ENCODE measurements at regions of chr3 and their contacts with region 1.

Region 1: GRCh38 chr3:14651440-14652251 is at the start of gene CCDC174:
- DNase-seq: peak; percentile 95 to 98 (median 97)
- H3K4me3 ChIP-seq: peak within 1 kb of the TSS; percentile 67 to 98
- H3K4me3 Mint-ChIP-seq: peak within 1 kb of the TSS; percentile 84 to 99 (median 94)
- H3K27ac ChIP-seq: peak within 1 kb of the TSS; percentile 98
- H3K27ac Mint-ChIP-seq: peak within 1 kb of the TSS; percentile 91 to 100 (median 98)
- H3K4me1 ChIP-seq: peaks cover 37% of the 10 kb centered on the region
- H3K4me1 Mint-ChIP-seq: peaks cover 27 to 50% (median 40%) of the 10 kb centered on the region in 4 donors
- H3K27me3 ChIP-seq: no peaks in the 10 kb centered on the region
- H3K27me3 Mint-ChIP-seq: no peaks in the 10 kb centered on the region
- total RNA-seq, gene CCDC174: 45.9 to 51.8 TPM

Region 2: DNA sequence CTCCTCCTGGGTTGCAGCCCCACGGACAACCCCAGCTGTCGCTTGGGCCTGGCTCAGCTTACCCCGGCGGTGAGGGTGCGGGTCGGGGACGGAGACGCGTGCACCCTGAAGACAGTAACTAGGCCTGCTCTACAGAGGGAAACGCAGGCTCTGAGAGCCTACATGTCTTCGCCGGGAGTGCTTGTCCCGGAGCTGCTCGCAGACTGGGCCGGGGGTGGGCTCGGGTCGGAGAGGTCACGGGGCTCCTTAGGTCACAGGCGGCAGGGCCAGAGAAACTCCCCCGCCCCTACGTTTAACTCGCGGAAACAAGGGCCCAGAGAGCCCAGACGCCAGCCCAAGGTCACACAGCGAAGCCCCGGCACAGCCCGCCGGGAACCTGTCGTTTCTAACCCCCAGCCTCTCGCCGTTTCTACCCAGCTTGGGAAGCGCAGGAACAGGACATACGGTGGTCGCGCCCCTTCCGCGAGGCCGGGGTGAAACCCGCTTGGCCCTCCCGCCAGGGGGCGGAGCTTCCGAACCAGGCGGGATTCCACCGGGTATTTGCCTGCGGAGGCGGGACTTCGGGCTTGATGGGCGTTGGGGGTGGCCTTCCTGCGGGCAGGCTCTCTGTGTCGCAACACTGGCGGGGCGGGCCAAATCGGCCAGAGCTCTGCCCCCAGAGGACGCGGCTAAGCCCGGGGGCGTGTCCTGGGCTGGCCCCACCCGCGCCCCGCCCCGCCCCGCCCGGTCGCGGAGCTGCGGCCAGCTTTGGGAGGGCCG is 1171.9 kb before region 1 on chr3 and contains the start of gene HDAC11:
- CTCF ChIA-PET with region 1: no interaction called
- POLR2A ChIA-PET with region 1: interaction called, 3 read pairs
- intact Hi-C with region 1: loop called (anchors 2 kb)
- DNase-seq: peak; percentile 96 to 97 (median 96)
- H3K4me3 ChIP-seq: peak within 1 kb of the TSS; percentile 52 to 92
- H3K4me3 Mint-ChIP-seq: peak within 1 kb of the TSS; percentile 91 to 95 (median 94)
- H3K27ac ChIP-seq: peak within 1 kb of the TSS; percentile 90
- H3K27ac Mint-ChIP-seq: peak within 1 kb of the TSS; percentile 94 to 96 (median 96)
- H3K4me1 ChIP-seq: peaks cover 28% of the 10 kb centered on the region
- H3K4me1 Mint-ChIP-seq: peaks cover 6 to 35% (median 20%) of the 10 kb centered on the region in 4 donors
- H3K27me3 ChIP-seq: no peaks in the 10 kb centered on the region
- H3K27me3 Mint-ChIP-seq: peaks cover 0 to under 1% of the 10 kb centered on the region in 2 donors
- total RNA-seq, gene HDAC11: 7.1 to 7.6 TPM

Region 3: GRCh38 chr3:14124615-14125190 is 526.9 kb before region 1 on chr3 and contains the starts of genes CHCHD4 and TMEM43:
- CTCF ChIA-PET with region 1: no interaction called
- POLR2A ChIA-PET with region 1: interaction called, 19 read pairs
- intact Hi-C with region 1: no loop called
- DNase-seq: peak; percentile 97 to 99 (median 99)
- H3K4me3 ChIP-seq: peak within 1 kb of the TSS; percentile 53 to 78
- H3K4me3 Mint-ChIP-seq: peak within 1 kb of the TSS; percentile 95 to 98 (median 96)
- H3K27ac ChIP-seq: peak within 1 kb of the TSS; percentile 89
- H3K27ac Mint-ChIP-seq: peak within 1 kb of the TSS; percentile 96 to 97 (median 97)
- H3K4me1 ChIP-seq: peaks cover 38% of the 10 kb centered on the region
- H3K4me1 Mint-ChIP-seq: peaks cover 38 to 64% (median 54%) of the 10 kb centered on the region in 4 donors
- H3K27me3 ChIP-seq: no peaks in the 10 kb centered on the region
- H3K27me3 Mint-ChIP-seq: no peaks in the 10 kb centered on the region
- total RNA-seq, gene CHCHD4: 7.5 to 9.3 TPM
- total RNA-seq, gene TMEM43: 69.3 to 69.7 TPM

Region 4: DNA sequence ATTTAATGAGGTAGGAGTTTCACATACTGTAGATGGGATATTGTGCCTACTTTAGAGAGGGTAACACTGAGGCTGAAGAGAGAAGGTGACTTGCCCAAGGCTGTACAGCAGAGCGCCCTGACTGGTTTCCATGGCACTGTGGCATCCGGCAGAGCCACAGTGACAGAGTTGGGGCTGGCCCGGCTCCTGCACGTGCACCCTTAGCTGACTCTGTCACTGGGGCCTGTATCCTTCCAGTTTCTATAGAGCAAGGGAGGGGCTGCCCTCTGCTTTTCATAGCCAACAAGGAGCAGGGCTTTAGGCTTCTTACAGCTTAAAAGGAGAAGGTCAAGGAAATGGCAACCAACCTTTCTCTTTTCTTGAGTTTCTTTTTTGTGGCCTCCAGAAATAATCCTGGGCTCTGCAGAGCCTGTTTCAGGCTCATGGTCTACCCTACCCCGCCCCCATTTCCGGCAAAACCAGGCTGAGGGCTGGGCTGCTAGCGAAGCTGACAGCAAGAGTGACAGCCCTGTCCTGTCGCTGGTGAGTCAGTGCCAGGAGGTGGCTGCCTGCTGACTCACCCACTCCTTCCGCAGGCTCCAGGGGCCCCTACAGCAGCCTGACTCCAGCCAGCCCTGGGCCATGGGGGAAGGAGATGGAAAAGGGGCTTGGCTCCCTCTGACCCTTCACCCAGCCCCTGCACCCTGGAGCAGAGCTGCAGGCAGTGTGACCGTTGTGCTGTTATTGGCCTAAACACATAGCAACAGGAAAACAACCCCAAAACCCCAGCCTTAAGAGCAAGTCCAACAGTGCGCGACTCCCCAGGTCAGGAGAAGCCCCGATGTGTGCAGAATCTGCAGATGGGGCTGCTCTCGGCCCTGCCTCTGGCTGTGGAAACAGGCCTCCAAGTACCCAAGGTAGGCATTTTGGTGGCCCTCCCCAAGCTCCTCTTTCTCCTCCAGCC is 219.5 kb before region 1 on chr3:
- CTCF ChIA-PET with region 1: no interaction called
- POLR2A ChIA-PET with region 1: interaction called, 16 read pairs
- intact Hi-C with region 1: no loop called
- DNase-seq: peak; percentile 93 to 99 (median 94)
- H3K4me3 ChIP-seq: peak overlapping the region; percentile 55 to 77
- H3K4me3 Mint-ChIP-seq: peak overlapping the region; percentile 77 to 93 (median 80)
- H3K27ac ChIP-seq: peak overlapping the region; percentile 98
- H3K27ac Mint-ChIP-seq: peak overlapping the region; percentile 97 to 100 (median 100)
- H3K4me1 ChIP-seq: peaks cover 97% of the 10 kb centered on the region
- H3K4me1 Mint-ChIP-seq: peaks cover 64 to 98% (median 87%) of the 10 kb centered on the region in 4 donors
- H3K27me3 ChIP-seq: no peaks in the 10 kb centered on the region
- H3K27me3 Mint-ChIP-seq: no peaks in the 10 kb centered on the region

Region 5: GRCh38 chr3:14565868-14566588 is 85.6 kb before region 1 on chr3:
- CTCF ChIA-PET with region 1: no interaction called
- POLR2A ChIA-PET with region 1: no interaction called
- intact Hi-C with region 1: no loop called
- DNase-seq: no peak
- H3K4me3 ChIP-seq: no peak overlapping the region
- H3K4me3 Mint-ChIP-seq: no peak overlapping the region
- H3K27ac ChIP-seq: no peak overlapping the region
- H3K27ac Mint-ChIP-seq: no peak overlapping the region
- H3K4me1 ChIP-seq: no peaks in the 10 kb centered on the region
- H3K4me1 Mint-ChIP-seq: peaks cover 0 to 1% (median 0%) of the 10 kb centered on the region in 4 donors
- H3K27me3 ChIP-seq: no peaks in the 10 kb centered on the region
- H3K27me3 Mint-ChIP-seq: peaks cover 9 to 13% of the 10 kb centered on the region in 2 donors

Region 6: GRCh38 chr3:14672588-14672987 is 20.9 kb after region 1 on chr3:
- CTCF ChIA-PET with region 1: no interaction called
- POLR2A ChIA-PET with region 1: interaction called, 10 read pairs
- intact Hi-C with region 1: no loop called
- DNase-seq: no peak
- H3K4me3 ChIP-seq: no peak overlapping the region
- H3K4me3 Mint-ChIP-seq: no peak overlapping the region
- H3K27ac ChIP-seq: no peak overlapping the region
- H3K27ac Mint-ChIP-seq: peak overlapping the region in 3 of 7 donors; percentile 8 to 60 (median 8)
- H3K4me1 ChIP-seq: no peaks in the 10 kb centered on the region
- H3K4me1 Mint-ChIP-seq: peaks cover 0 to 3% (median 0%) of the 10 kb centered on the region in 4 donors
- H3K27me3 ChIP-seq: no peaks in the 10 kb centered on the region
- H3K27me3 Mint-ChIP-seq: no peaks in the 10 kb centered on the region

Region 7: DNA sequence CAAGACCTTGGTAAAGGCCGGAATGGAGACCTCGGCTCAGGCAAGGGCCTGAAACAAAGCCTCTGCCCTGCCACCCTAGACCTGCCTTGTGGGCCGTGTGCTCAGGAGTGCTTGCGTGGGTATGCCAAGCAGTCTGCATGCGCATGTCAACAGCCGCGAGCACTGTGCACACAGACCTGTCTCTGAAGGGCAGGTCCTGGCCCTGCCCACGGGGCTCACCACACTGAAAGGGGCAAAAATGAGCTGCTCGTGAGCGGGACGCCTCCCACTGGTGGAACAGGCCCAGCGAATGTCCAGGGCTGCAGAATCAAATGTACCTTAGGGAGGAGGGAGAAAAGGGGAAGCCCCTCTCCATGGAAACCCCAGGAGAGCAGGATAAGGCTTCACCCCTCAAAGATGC is 122.8 kb after region 1 on chr3:
- CTCF ChIA-PET with region 1: no interaction called
- POLR2A ChIA-PET with region 1: no interaction called
- intact Hi-C with region 1: no loop called
- DNase-seq: no peak
- H3K4me3 ChIP-seq: no peak overlapping the region
- H3K4me3 Mint-ChIP-seq: no peak overlapping the region
- H3K27ac ChIP-seq: no peak overlapping the region
- H3K27ac Mint-ChIP-seq: no peak overlapping the region
- H3K4me1 ChIP-seq: no peaks in the 10 kb centered on the region
- H3K4me1 Mint-ChIP-seq: no peaks in the 10 kb centered on the region
- H3K27me3 ChIP-seq: no peaks in the 10 kb centered on the region
- H3K27me3 Mint-ChIP-seq: no peaks in the 10 kb centered on the region

Region 8: DNA sequence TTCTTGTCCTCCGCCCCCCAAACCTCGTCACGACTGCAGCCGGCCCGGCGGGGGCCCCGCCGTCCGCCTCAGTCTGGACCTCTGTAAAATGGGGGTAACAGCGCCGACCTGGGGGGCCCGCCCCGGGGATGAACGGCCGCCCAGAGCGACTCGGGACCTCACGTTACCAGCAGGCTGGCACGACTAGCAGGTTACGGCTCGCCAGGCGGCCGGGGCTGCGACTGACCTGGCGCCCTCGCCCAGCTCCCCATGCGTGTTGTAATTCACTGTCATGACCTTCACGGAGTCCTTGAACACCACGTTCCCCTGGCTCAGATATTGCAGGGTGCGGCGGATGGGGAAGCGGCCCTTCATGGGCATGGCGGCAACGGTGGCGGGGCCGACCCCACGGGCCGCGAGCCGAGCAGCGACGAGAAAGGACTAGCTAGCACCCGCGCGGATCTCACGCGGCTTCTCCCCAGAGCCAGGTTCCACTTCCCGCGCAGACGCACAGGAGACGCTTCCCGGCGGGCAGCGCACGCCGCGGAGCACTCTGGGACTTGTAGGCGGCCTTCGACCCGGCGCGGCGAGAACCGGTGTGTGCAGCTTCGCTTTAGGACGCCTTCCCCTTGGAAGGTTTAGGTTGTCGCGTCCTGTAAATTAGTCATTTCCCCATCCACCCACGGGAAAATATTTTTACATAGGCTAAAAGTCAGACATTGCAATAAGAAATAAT is 413.3 kb after region 1 on chr3 and contains the start of gene MRPS25:
- CTCF ChIA-PET with region 1: no interaction called
- POLR2A ChIA-PET with region 1: interaction called, 14 read pairs
- intact Hi-C with region 1: loop called (anchors 1 kb)
- DNase-seq: peak; percentile 86 to 90 (median 89)
- H3K4me3 ChIP-seq: peak within 1 kb of the TSS; percentile 19 to 78
- H3K4me3 Mint-ChIP-seq: peak within 1 kb of the TSS; percentile 93 to 99 (median 96)
- H3K27ac ChIP-seq: peak within 1 kb of the TSS; percentile 79
- H3K27ac Mint-ChIP-seq: peak within 1 kb of the TSS; percentile 88 to 98 (median 96)
- H3K4me1 ChIP-seq: peaks cover 18% of the 10 kb centered on the region
- H3K4me1 Mint-ChIP-seq: peaks cover 11 to 34% (median 23%) of the 10 kb centered on the region in 4 donors
- H3K27me3 ChIP-seq: no peaks in the 10 kb centered on the region
- H3K27me3 Mint-ChIP-seq: no peaks in the 10 kb centered on the region
- total RNA-seq, gene MRPS25: 77.1 to 80.3 TPM

Region 9: GRCh38 chr3:15098503-15099363 is 447.1 kb after region 1 on chr3 and contains the start of gene RBSN:
- CTCF ChIA-PET with region 1: interaction called, 3 read pairs
- POLR2A ChIA-PET with region 1: interaction called, 24 read pairs
- intact Hi-C with region 1: loop called (anchors 1 kb)
- DNase-seq: peak; percentile 96 to 98 (median 96)
- H3K4me3 ChIP-seq: peak within 1 kb of the TSS; percentile 61 to 73
- H3K4me3 Mint-ChIP-seq: peak within 1 kb of the TSS; percentile 88 to 99 (median 96)
- H3K27ac ChIP-seq: peak within 1 kb of the TSS; percentile 95
- H3K27ac Mint-ChIP-seq: peak within 1 kb of the TSS; percentile 89 to 99 (median 99)
- H3K4me1 ChIP-seq: peaks cover 22% of the 10 kb centered on the region
- H3K4me1 Mint-ChIP-seq: peaks cover 19 to 35% (median 27%) of the 10 kb centered on the region in 4 donors
- H3K27me3 ChIP-seq: no peaks in the 10 kb centered on the region
- H3K27me3 Mint-ChIP-seq: peaks cover 1 to 2% of the 10 kb centered on the region in 2 donors
- total RNA-seq, gene RBSN: 33.2 to 34.7 TPM